Activated naive CD4-positive, alpha-beta T cell treated with anti-CD3 and anti-CD28 coated beads, Interleukin-2, amount 10 ng/mL, durations not matched to agents 7 days and 5 days (primary cell): ENCODE measurements at regions of chr7 and their contacts with region 1.

Region 1: GRCh38 chr7:65840446-65840845 is 32.4 kb upstream of the VKORC1L1 start:
- DNase-seq: peak; percentile 57
- H3K4me3 Mint-ChIP-seq: no peak overlapping the region
- H3K27ac Mint-ChIP-seq: no peak overlapping the region
- H3K4me1 Mint-ChIP-seq: peaks cover 2% of the 10 kb centered on the region
- H3K27me3 Mint-ChIP-seq: no peaks in the 10 kb centered on the region

Region 2: GRCh38 chr7:65722345-65722792 is 118.1 kb before region 1 on chr7:
- CTCF ChIA-PET with region 1: interaction called, 23 read pairs
- DNase-seq: peak; percentile 81
- H3K4me3 Mint-ChIP-seq: no peak overlapping the region
- H3K27ac Mint-ChIP-seq: peak overlapping the region; percentile 76
- H3K4me1 Mint-ChIP-seq: peaks cover 2% of the 10 kb centered on the region
- H3K27me3 Mint-ChIP-seq: no peaks in the 10 kb centered on the region

Region 3: GRCh38 chr7:65731562-65732035 is 108.8 kb before region 1 on chr7:
- CTCF ChIA-PET with region 1: interaction called, 15 read pairs
- DNase-seq: peak; percentile 58
- H3K4me3 Mint-ChIP-seq: peak overlapping the region; percentile 9
- H3K27ac Mint-ChIP-seq: no peak overlapping the region
- H3K4me1 Mint-ChIP-seq: peaks cover 16% of the 10 kb centered on the region
- H3K27me3 Mint-ChIP-seq: no peaks in the 10 kb centered on the region